Natural killer cell (primary cell): ENCODE measurements at regions of chr5 and their contacts with region 1.

Region 1: GRCh38 chr5:154189819-154190594 is 526 bp upstream of the GALNT10 start:
- DNase-seq: peak; percentile 83 to 93
- ATAC-seq: peak; percentile 89 to 96 (median 90)
- H3K4me3 ChIP-seq: peak overlapping the region; percentile 96
- H3K4me3 Mint-ChIP-seq: peak overlapping the region; percentile 92
- H3K27ac ChIP-seq: peak overlapping the region; percentile 84
- H3K27ac Mint-ChIP-seq: peak overlapping the region; percentile 80 to 88
- H3K4me1 ChIP-seq: peaks cover 29% of the 10 kb centered on the region
- H3K4me1 Mint-ChIP-seq: peaks cover 46 to 54% of the 10 kb centered on the region in 2 donors
- H3K27me3 ChIP-seq: no peaks in the 10 kb centered on the region
- H3K27me3 Mint-ChIP-seq: no peaks in the 10 kb centered on the region
- CTCF ChIP-seq: peak; percentile 41

Region 2: DNA sequence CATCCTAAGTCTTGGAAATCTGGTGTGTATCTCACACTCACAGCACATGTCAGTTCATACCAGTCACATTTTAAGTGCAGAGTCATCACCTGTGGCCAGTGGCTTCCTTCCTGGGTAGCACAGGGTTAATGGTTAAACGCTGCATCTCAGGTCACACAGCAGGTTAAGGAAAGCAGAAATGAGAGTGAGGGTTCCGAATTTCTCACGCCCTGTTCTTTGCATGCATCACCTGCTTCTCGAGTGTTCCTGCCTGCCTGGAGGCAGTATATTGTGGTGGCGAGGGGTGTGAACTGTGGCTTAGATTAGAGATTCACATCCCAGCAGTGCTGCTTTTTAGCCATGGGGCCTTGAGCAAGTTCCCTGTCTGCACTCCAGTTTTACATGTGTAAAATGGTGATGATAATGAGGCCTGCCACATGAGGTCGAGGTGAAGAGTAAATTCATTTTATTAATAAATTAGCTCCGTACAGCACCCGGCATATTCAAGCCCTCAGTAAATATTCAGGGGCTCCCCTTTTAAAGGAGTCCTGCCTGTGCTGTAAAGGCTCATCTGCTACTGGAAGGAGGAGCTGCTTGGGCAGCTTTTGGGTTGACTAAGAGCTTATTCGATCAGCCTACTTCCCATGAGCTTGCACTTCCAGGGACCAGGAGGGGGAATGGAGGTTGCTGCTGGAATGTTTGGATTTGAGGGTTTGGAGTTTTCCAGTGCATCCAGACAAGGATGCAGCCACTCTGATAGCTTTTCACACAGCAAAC is 194.7 kb after region 1 on chr5:
- intact Hi-C with region 1: loop called (anchors 10 kb)
- DNase-seq: peak; percentile 35 to 71
- ATAC-seq: peak; percentile 75 to 85 (median 81)
- H3K4me3 ChIP-seq: no peak overlapping the region
- H3K4me3 Mint-ChIP-seq: peak overlapping the region; percentile 67
- H3K27ac ChIP-seq: peak overlapping the region; percentile 73
- H3K27ac Mint-ChIP-seq: peak overlapping the region; percentile 89 to 92
- H3K4me1 ChIP-seq: peaks cover 29% of the 10 kb centered on the region
- H3K4me1 Mint-ChIP-seq: peaks cover 29 to 40% of the 10 kb centered on the region in 2 donors
- H3K27me3 ChIP-seq: no peaks in the 10 kb centered on the region
- H3K27me3 Mint-ChIP-seq: no peaks in the 10 kb centered on the region
- CTCF ChIP-seq: no peak

Region 3: DNA sequence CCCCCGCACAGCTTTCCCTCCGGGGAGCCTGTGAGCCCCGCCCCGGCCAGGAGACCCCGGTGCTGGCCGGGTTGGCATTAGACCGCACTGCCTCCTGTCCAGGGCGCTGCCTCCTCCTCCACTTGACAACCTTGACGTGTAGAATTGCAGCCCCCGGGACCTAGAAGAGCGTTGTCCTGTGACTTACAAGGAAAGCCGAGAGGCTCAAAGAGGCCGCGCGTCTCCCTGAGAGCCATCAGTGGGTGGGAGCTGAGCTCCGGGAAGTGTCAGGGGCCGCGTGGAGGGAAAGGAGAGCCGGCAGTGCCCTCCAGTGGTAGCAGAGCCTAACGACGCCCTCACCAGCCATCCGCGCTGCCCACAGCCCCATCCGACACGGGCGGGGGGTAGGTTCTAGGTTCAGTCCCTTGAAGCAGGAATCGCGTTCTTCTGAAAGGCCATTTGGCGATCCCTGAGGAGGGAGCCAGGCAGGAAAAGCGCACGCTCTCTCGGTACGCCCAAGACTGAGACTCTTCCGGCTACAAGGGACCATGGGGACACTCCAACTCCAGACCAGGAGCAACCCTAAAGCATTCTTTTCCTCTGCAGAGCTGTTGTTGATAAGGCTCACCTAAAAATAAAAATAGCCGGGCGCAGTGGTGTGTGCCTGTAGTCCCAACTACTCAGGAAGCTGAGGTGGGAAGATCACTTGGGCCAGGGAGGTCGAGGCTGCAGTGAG is 215.2 kb after region 1 on chr5:
- intact Hi-C with region 1: loop called (anchors 10 kb)
- DNase-seq: peak; percentile 68 to 83
- ATAC-seq: peak; percentile 93 to 100 (median 99)
- H3K4me3 ChIP-seq: no peak overlapping the region
- H3K4me3 Mint-ChIP-seq: peak overlapping the region; percentile 32
- H3K27ac ChIP-seq: no peak overlapping the region
- H3K27ac Mint-ChIP-seq: peak overlapping the region; percentile 45 to 78
- H3K4me1 ChIP-seq: peaks cover 9% of the 10 kb centered on the region
- H3K4me1 Mint-ChIP-seq: peaks cover 13 to 25% of the 10 kb centered on the region in 2 donors
- H3K27me3 ChIP-seq: no peaks in the 10 kb centered on the region
- H3K27me3 Mint-ChIP-seq: no peaks in the 10 kb centered on the region
- CTCF ChIP-seq: peak; percentile 85

Region 4: GRCh38 chr5:154445422-154446182 is 255.6 kb after region 1 on chr5 and contains the start of gene SAP30L:
- intact Hi-C with region 1: loop called (anchors 10 kb)
- DNase-seq: peak; percentile 97
- ATAC-seq: peak; percentile 94 to 99 (median 95)
- H3K4me3 ChIP-seq: peak within 1 kb of the TSS; percentile 99
- H3K4me3 Mint-ChIP-seq: peak within 1 kb of the TSS; percentile 99
- H3K27ac ChIP-seq: peak within 1 kb of the TSS; percentile 76
- H3K27ac Mint-ChIP-seq: peak within 1 kb of the TSS; percentile 92 to 99
- H3K4me1 ChIP-seq: peaks cover 24% of the 10 kb centered on the region
- H3K4me1 Mint-ChIP-seq: peaks cover 56 to 68% of the 10 kb centered on the region in 2 donors
- H3K27me3 ChIP-seq: no peaks in the 10 kb centered on the region
- H3K27me3 Mint-ChIP-seq: no peaks in the 10 kb centered on the region
- CTCF ChIP-seq: no peak
- total RNA-seq, gene SAP30L: 37.0 to 48.4 (median 47.6) TPM